Caco-2 (cell line): ENCODE measurements at regions of chr6 and their contacts with region 1.

Region 1: DNA sequence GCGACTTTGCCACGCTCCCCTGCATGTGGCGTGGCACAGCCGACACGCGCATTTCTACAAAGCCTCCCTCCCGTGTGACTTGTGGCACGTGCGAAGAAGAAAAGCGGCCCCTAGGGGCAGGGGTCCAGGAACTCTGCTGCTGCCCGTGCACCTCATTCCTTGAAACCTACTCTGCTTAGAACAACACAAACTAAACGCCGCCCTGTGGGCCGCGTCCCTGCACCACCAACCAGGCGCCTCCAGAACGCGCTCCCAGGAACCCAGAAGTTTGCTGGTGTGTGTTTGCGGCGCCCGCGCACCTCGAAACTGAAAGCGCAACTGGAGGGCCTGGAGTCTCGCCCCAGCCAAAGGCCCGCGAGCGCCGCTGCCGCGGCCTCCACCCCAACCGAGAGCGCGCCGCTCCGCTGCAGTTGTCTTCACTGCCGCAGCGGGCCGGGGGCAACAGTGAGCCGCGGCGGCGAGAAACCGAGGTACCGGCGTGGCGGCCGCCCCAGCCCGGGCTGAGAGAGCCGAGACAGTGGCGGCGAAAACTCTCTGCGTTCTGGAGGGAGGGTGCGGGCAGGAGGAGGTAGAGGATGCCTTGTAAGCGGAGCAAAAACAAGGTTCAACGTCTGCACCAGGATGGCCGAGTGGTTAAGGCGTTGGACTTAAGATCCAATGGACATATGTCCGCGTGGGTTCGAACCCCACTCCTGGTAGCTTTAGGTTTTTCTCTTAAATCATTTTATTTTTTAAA is 65.8 kb downstream of the STX11 start:
- DNase-seq: peak; percentile 95 to 96
- H3K4me3 ChIP-seq: peak overlapping the region; percentile 70
- H3K4me3 Mint-ChIP-seq: peak overlapping the region; percentile 86
- H3K27ac Mint-ChIP-seq: peak overlapping the region; percentile 90
- H3K4me1 ChIP-seq: peaks cover 7% of the 10 kb centered on the region
- H3K4me1 Mint-ChIP-seq: peaks cover 34% of the 10 kb centered on the region
- H3K27me3 ChIP-seq: no peaks in the 10 kb centered on the region
- H3K27me3 Mint-ChIP-seq: peaks cover 6% of the 10 kb centered on the region
- CTCF ChIP-seq: peak; percentile 57 to 77

Region 2: DNA sequence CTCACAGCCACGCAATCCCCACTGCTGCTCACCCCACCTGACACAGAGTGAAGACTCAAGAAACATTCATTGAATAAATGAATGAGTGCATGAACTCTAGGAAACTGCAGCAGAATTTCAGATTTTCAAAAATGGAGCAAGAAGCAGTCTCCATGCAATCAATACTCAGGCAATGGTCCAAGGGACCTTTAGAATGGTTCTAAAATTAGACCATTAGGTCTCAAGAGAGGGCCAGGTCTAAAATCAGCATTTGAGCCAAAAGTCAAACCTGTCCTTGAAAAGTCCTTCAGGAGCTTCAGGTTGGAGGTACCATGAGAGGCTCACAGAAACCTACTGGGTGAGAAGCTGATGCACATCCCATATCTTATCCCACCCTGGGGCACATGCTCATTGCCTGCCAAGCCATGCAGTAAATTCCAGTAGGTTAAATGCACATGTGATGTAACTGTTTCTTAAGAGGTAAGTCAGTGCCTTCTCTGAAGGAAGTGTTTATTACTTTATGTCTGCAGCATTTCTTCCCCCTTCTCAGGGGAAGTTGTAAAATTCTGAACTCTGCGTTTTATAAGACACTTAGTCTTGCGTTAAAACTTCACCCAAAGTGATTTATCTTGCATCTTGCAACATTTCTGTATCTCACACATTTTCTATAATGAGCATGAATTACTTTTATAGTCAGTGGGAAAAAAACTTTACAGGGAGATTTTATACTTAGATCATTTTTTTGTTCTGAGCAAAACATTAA is 892.2 kb before region 1 on chr6:
- CTCF ChIA-PET with region 1: no interaction called
- POLR2A ChIA-PET with region 1: no interaction called
- intact Hi-C with region 1: no loop called
- DNase-seq: no peak
- H3K4me3 ChIP-seq: no peak overlapping the region
- H3K4me3 Mint-ChIP-seq: no peak overlapping the region
- H3K27ac Mint-ChIP-seq: no peak overlapping the region
- H3K4me1 ChIP-seq: no peaks in the 10 kb centered on the region
- H3K4me1 Mint-ChIP-seq: no peaks in the 10 kb centered on the region
- H3K27me3 ChIP-seq: no peaks in the 10 kb centered on the region
- H3K27me3 Mint-ChIP-seq: no peaks in the 10 kb centered on the region
- CTCF ChIP-seq: no peak

Region 3: GRCh38 chr6:144149891-144150709 is 66.0 kb before region 1 on chr6 and contains the start of gene STX11:
- CTCF ChIA-PET with region 1: no interaction called
- POLR2A ChIA-PET with region 1: no interaction called
- intact Hi-C with region 1: loop called (anchors 1 kb)
- DNase-seq: peak; percentile 60 to 80
- H3K4me3 ChIP-seq: peak within 1 kb of the TSS; percentile 78
- H3K4me3 Mint-ChIP-seq: peak within 1 kb of the TSS; percentile 83
- H3K27ac Mint-ChIP-seq: no peak within 1 kb of the TSS
- H3K4me1 ChIP-seq: peaks cover 8% of the 10 kb centered on the region
- H3K4me1 Mint-ChIP-seq: peaks cover 7% of the 10 kb centered on the region
- H3K27me3 ChIP-seq: no peaks in the 10 kb centered on the region
- H3K27me3 Mint-ChIP-seq: peaks cover 2% of the 10 kb centered on the region
- CTCF ChIP-seq: peak in 1 of 2 experiments; percentile 15
- total RNA-seq, gene STX11: 1.3 TPM in 2 replicates

Region 4: DNA sequence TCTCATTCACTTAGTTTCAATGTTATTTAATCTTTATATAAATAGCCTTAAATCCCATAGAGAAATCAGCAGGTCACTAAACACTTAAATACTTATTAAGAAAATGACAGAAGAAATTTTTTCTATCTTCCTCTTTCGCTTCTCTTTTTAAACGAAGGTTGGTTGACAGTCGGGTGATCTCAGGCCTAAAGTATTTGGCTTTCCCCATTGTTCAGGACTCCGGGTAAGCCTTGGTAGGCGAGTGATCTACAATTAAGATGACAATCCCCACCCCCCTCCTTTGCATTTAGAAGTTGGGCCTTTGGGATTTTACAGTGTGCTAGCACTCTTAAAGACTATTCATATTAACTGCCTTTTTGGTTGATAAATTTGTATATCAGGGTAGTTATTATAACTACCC is 49.3 kb after region 1 on chr6:
- CTCF ChIA-PET with region 1: interaction called, 3 read pairs
- POLR2A ChIA-PET with region 1: interaction called, 4 read pairs
- intact Hi-C with region 1: loop called (anchors 1 kb)
- DNase-seq: peak; percentile 61 to 73
- H3K4me3 ChIP-seq: no peak overlapping the region; the same call in 1 of the 2 replicates
- H3K4me3 Mint-ChIP-seq: peak overlapping the region; percentile 68
- H3K27ac Mint-ChIP-seq: peak overlapping the region; percentile 97
- H3K4me1 ChIP-seq: peaks cover 59% of the 10 kb centered on the region
- H3K4me1 Mint-ChIP-seq: peaks cover 22% of the 10 kb centered on the region
- H3K27me3 ChIP-seq: no peaks in the 10 kb centered on the region
- H3K27me3 Mint-ChIP-seq: no peaks in the 10 kb centered on the region
- CTCF ChIP-seq: no peak

Region 5: GRCh38 chr6:144411332-144412190 is 195.5 kb after region 1 on chr6:
- CTCF ChIA-PET with region 1: no interaction called
- POLR2A ChIA-PET with region 1: no interaction called
- intact Hi-C with region 1: loop called (anchors 10 kb)
- DNase-seq: no peak
- H3K4me3 ChIP-seq: no peak overlapping the region
- H3K4me3 Mint-ChIP-seq: no peak overlapping the region
- H3K27ac Mint-ChIP-seq: no peak overlapping the region
- H3K4me1 ChIP-seq: peaks cover 19% of the 10 kb centered on the region
- H3K4me1 Mint-ChIP-seq: peaks cover 32% of the 10 kb centered on the region
- H3K27me3 ChIP-seq: no peaks in the 10 kb centered on the region
- H3K27me3 Mint-ChIP-seq: no peaks in the 10 kb centered on the region
- CTCF ChIP-seq: no peak